Naive thymus-derived CD4-positive, alpha-beta T cell (primary cell): ENCODE measurements at regions of chr19 and their contacts with region 1.

Region 1: GRCh38 chr19:14571695-14572490 is at the start of gene NDUFB7:
- DNase-seq: peak; percentile 76 to 91 (median 87)
- ATAC-seq: peak; percentile 98
- H3K4me3 ChIP-seq: peak within 1 kb of the TSS; percentile 99
- H3K4me3 Mint-ChIP-seq: peak within 1 kb of the TSS; percentile 92 to 97 (median 96)
- H3K27ac ChIP-seq: peak within 1 kb of the TSS; percentile 74
- H3K27ac Mint-ChIP-seq: peak within 1 kb of the TSS; percentile 83 to 96 (median 89)
- H3K4me1 ChIP-seq: peaks cover 14% of the 10 kb centered on the region in 2 donors
- H3K4me1 Mint-ChIP-seq: peaks cover 26 to 54% (median 37%) of the 10 kb centered on the region in 7 donors
- H3K27me3 ChIP-seq: no peaks in the 10 kb centered on the region
- H3K27me3 Mint-ChIP-seq: no peaks in the 10 kb centered on the region
- total RNA-seq, gene NDUFB7: 50.6 to 129 (median 63.4) TPM

Region 2: GRCh38 chr19:14419106-14419813 is 152.6 kb before region 1 on chr19 and contains the start of gene DDX39A:
- CTCF ChIA-PET with region 1: no interaction called
- POLR2A ChIA-PET with region 1: no interaction called
- intact Hi-C with region 1: loop called in 1 of 2 experiments (anchors 1 kb)
- DNase-seq: peak; percentile 80 to 99 (median 98)
- ATAC-seq: peak; percentile 90
- H3K4me3 ChIP-seq: peak within 1 kb of the TSS; percentile 87
- H3K4me3 Mint-ChIP-seq: peak within 1 kb of the TSS; percentile 83 to 97 (median 92)
- H3K27ac ChIP-seq: peak within 1 kb of the TSS; percentile 92
- H3K27ac Mint-ChIP-seq: peak within 1 kb of the TSS; percentile 90 to 97 (median 95)
- H3K4me1 ChIP-seq: peaks cover 24 to 29% of the 10 kb centered on the region in 2 donors
- H3K4me1 Mint-ChIP-seq: peaks cover 23 to 49% (median 38%) of the 10 kb centered on the region in 7 donors
- H3K27me3 ChIP-seq: no peaks in the 10 kb centered on the region
- H3K27me3 Mint-ChIP-seq: peaks cover 0 to 2% (median 0%) of the 10 kb centered on the region in 5 donors
- total RNA-seq, gene DDX39A: 135 to 288 (median 215) TPM

Region 3: GRCh38 chr19:14505488-14506432 is 66.1 kb before region 1 on chr19:
- CTCF ChIA-PET with region 1: interaction called, 5 read pairs
- POLR2A ChIA-PET with region 1: interaction called, 11 read pairs
- intact Hi-C with region 1: loop called in 1 of 2 experiments (anchors 1 kb)
- DNase-seq: peak; percentile 62 to 79 (median 71)
- ATAC-seq: peak; percentile 68
- H3K4me3 ChIP-seq: no peak overlapping the region
- H3K4me3 Mint-ChIP-seq: peak overlapping the region; percentile 13 to 84 (median 65)
- H3K27ac ChIP-seq: peak overlapping the region; percentile 70
- H3K27ac Mint-ChIP-seq: peak overlapping the region; percentile 96 to 100 (median 97)
- H3K4me1 ChIP-seq: peaks cover 29 to 50% of the 10 kb centered on the region in 2 donors
- H3K4me1 Mint-ChIP-seq: peaks cover 43 to 78% (median 69%) of the 10 kb centered on the region in 7 donors
- H3K27me3 ChIP-seq: no peaks in the 10 kb centered on the region
- H3K27me3 Mint-ChIP-seq: peaks cover 0 to 7% (median 0%) of the 10 kb centered on the region in 5 donors

Region 4: GRCh38 chr19:14529254-14530004 is 42.5 kb before region 1 on chr19 and contains the start of gene TECR:
- CTCF ChIA-PET with region 1: interaction called, 3 read pairs
- POLR2A ChIA-PET with region 1: interaction called, 4 read pairs
- intact Hi-C with region 1: loop called (anchors 1 kb)
- DNase-seq: peak; percentile 98 to 100 (median 100)
- ATAC-seq: peak; percentile 96
- H3K4me3 ChIP-seq: peak within 1 kb of the TSS; percentile 96
- H3K4me3 Mint-ChIP-seq: peak within 1 kb of the TSS; percentile 88 to 97 (median 95)
- H3K27ac ChIP-seq: peak within 1 kb of the TSS; percentile 89
- H3K27ac Mint-ChIP-seq: peak within 1 kb of the TSS; percentile 95 to 100 (median 98)
- H3K4me1 ChIP-seq: peaks cover 22 to 30% of the 10 kb centered on the region in 2 donors
- H3K4me1 Mint-ChIP-seq: peaks cover 9 to 72% (median 54%) of the 10 kb centered on the region in 7 donors
- H3K27me3 ChIP-seq: no peaks in the 10 kb centered on the region
- H3K27me3 Mint-ChIP-seq: no peaks in the 10 kb centered on the region
- total RNA-seq, gene TECR: 123 to 218 (median 150) TPM

Region 5: DNA sequence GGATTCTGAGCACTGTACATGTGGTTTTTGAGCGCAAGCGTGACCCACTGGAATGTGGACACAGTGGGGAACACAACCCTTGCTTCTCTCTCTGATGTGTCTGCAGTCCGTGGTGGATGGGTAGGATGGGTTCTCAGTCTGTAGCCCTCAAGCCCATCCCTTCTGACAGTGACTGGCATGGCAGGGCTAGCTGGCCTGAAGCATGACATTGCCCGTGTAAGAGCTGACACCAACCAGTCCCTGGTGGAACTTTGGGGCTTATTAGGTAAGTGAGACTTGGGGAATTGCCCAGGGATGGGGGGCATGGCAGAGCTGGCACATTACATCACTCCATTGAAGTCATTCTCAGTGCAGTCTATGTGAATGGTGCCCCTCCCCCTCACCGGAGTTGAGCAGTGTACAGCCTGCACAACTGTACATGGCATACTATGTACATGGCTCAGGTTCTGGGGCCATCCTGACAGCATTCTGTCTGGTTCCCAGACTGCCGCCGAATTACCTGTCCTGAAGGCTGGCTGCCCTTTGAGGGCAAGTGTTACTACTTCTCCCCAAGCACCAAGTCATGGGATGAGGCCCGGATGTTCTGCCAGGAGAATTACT is 27.8 kb after region 1 on chr19:
- CTCF ChIA-PET with region 1: no interaction called
- POLR2A ChIA-PET with region 1: no interaction called
- intact Hi-C with region 1: no loop called
- DNase-seq: no peak
- ATAC-seq: no peak
- H3K4me3 ChIP-seq: no peak overlapping the region
- H3K4me3 Mint-ChIP-seq: no peak overlapping the region
- H3K27ac ChIP-seq: no peak overlapping the region
- H3K27ac Mint-ChIP-seq: no peak overlapping the region
- H3K4me1 ChIP-seq: no peaks in the 10 kb centered on the region
- H3K4me1 Mint-ChIP-seq: peaks cover 0 to 8% (median 5%) of the 10 kb centered on the region in 7 donors
- H3K27me3 ChIP-seq: no peaks in the 10 kb centered on the region
- H3K27me3 Mint-ChIP-seq: peaks cover 0 to 16% (median 7%) of the 10 kb centered on the region in 5 donors

Region 6: DNA sequence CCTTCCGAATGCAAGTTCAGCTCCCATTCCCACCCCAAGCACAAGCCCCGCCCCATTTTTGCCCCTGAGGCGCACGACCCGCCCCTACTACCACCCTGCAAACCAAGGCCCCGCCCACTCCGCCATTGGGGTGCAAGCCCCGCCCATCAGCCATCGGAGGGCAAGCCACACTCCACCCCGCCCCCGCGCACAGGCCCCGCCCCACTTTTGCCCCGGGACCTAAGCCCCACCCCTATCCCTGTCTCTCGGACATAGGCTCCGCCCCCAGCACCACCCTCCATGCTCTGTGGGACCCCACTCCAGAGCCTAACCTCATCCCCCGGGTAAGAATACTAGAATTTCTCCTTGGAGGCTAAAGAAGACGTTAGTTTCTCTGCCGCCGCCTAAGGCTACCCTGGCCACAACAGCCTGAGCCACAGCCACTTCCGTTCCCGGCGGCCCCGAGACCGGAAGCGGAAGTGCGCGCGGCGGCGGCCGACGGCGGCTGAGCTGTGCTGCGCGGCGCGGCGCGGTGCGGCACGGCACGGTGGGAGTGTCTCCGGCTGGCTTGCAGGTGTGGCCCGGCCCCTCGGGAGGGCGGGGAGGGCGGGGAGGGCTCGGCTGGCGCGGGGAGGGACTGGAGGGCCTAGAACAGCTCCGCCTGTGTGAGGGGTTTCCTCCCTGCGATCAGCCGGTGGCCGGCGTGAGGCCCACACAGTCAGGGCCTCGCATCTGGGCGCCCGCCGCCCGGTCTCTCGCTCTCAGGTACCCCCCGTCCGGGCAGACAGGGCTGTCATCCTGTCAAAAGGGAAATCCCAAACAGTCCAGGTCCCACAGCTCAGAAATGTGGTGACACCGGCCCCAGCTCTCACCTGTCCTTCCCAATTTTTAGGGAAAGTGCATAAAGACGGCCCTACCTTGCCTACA is 118.0 kb after region 1 on chr19 and contains the start of gene ZNF333:
- CTCF ChIA-PET with region 1: interaction called, 60 read pairs
- POLR2A ChIA-PET with region 1: interaction called, 17 read pairs
- intact Hi-C with region 1: loop called (anchors 1 kb)
- DNase-seq: peak; percentile 92 to 99 (median 96)
- ATAC-seq: peak; percentile 94
- H3K4me3 ChIP-seq: peak within 1 kb of the TSS; percentile 93
- H3K4me3 Mint-ChIP-seq: peak within 1 kb of the TSS; percentile 81 to 99 (median 94)
- H3K27ac ChIP-seq: peak within 1 kb of the TSS; percentile 97
- H3K27ac Mint-ChIP-seq: peak within 1 kb of the TSS; percentile 93 to 100 (median 99)
- H3K4me1 ChIP-seq: peaks cover 6 to 16% of the 10 kb centered on the region in 2 donors
- H3K4me1 Mint-ChIP-seq: peaks cover 5 to 26% (median 23%) of the 10 kb centered on the region in 7 donors
- H3K27me3 ChIP-seq: no peaks in the 10 kb centered on the region
- H3K27me3 Mint-ChIP-seq: peaks cover 0 to 2% (median 0%) of the 10 kb centered on the region in 5 donors
- total RNA-seq, gene ZNF333: 15.4 to 56.3 (median 34.7) TPM

Region 7: DNA sequence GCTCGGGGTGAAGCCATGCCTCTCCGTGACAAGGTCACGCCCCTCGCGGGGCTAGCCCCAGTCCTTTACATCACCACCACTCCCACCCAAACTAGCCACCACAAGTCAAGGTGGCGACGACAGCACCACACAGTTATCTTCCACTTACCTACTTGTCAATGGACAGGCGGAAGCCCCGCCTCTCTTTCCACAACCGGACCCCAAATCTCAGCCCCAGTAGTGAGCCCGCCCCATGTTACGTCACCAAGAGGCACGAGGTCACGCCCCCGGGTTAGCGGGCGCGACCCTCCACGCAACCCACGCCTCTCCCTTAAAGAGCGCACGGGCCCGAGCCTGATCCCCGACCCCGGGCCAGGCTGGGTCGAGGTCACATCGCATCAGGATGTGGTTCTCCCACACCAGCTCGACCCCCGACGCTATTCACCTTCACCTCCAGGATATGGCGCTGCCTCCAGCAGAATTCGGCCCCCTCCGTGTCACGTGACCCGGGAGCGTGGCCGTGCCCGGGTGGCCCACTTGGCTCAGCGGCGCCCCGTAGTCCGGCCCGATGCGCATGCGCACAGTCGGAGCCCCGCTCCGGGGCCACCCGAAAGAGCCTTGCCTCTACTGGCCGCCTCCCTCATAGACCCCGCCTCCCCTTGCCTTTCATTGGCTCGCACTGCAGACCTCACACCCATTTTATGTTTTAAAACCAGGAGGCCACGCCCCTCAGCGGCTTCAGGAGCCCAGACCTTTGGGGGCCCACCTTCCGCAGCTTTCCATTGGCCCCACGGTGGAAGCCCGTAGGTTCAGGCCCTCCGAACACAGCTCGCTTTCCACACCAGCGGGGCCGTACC is 553.6 kb after region 1 on chr19:
- CTCF ChIA-PET with region 1: no interaction called
- POLR2A ChIA-PET with region 1: no interaction called
- intact Hi-C with region 1: loop called in 1 of 2 experiments (anchors 1 kb)
- DNase-seq: peak; percentile 94 to 98 (median 96)
- ATAC-seq: peak; percentile 93
- H3K4me3 ChIP-seq: peak overlapping the region; percentile 90
- H3K4me3 Mint-ChIP-seq: peak overlapping the region; percentile 89 to 100 (median 98)
- H3K27ac ChIP-seq: peak overlapping the region; percentile 92
- H3K27ac Mint-ChIP-seq: peak overlapping the region; percentile 91 to 100 (median 97)
- H3K4me1 ChIP-seq: peaks cover 0 to 25% of the 10 kb centered on the region in 2 donors
- H3K4me1 Mint-ChIP-seq: peaks cover 27 to 59% (median 44%) of the 10 kb centered on the region in 7 donors
- H3K27me3 ChIP-seq: no peaks in the 10 kb centered on the region
- H3K27me3 Mint-ChIP-seq: peaks cover 0 to 2% (median 0%) of the 10 kb centered on the region in 5 donors